CD8-positive, alpha-beta T cell (primary cell): ENCODE measurements at regions of chr17 and their contacts with region 1.

Region 1: GRCh38 chr17:42221937-42222745 is 27.8 kb upstream of the GHDC start:
- DNase-seq: peak; percentile 24 to 82 (median 66)
- ATAC-seq: peak; percentile 98
- H3K4me3 ChIP-seq: no peak overlapping the region
- H3K4me3 Mint-ChIP-seq: no peak overlapping the region
- H3K27ac ChIP-seq: no peak overlapping the region
- H3K27ac Mint-ChIP-seq: no peak overlapping the region
- H3K4me1 ChIP-seq: no peaks in the 10 kb centered on the region
- H3K4me1 Mint-ChIP-seq: peaks cover 5% of the 10 kb centered on the region
- H3K27me3 ChIP-seq: no peaks in the 10 kb centered on the region
- H3K27me3 Mint-ChIP-seq: no peaks in the 10 kb centered on the region
- CTCF ChIP-seq: peak; percentile 62

Region 2: DNA sequence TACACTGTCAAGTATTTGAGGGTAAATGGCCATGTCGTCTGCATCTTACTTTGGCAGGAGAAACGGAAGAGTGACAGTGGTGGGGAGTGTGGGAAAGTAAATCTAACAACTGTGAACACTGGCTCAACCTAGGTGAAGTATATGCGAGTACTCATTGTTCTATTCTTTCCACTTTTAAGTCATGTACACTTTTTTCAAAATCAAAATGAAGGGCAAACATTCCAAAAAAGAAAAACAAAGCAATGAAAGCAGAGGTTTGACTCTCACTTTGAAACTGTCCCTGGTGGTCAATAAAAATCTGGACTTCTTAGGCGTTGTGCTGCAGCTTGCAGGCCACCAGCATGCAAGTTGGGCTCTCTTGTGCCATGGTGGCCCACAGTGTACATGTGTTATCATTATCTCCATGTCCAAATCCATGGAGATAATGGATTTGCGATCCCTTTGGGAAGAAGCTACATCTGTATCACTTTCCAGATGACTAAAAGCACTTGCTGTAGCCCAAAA is 21.4 kb after region 1 on chr17:
- CTCF ChIA-PET with region 1: interaction called, 30 read pairs
- POLR2A ChIA-PET with region 1: interaction called, 10 read pairs
- intact Hi-C with region 1: loop called in 1 of 2 experiments (anchors 1 kb)
- DNase-seq: no peak
- ATAC-seq: no peak
- H3K4me3 ChIP-seq: no peak overlapping the region
- H3K4me3 Mint-ChIP-seq: no peak overlapping the region
- H3K27ac ChIP-seq: no peak overlapping the region
- H3K27ac Mint-ChIP-seq: peak overlapping the region; percentile 32
- H3K4me1 ChIP-seq: peaks cover 33% of the 10 kb centered on the region
- H3K4me1 Mint-ChIP-seq: peaks cover 58% of the 10 kb centered on the region
- H3K27me3 ChIP-seq: no peaks in the 10 kb centered on the region
- H3K27me3 Mint-ChIP-seq: no peaks in the 10 kb centered on the region
- CTCF ChIP-seq: no peak

Region 3: GRCh38 chr17:42266918-42267778 is 45.0 kb after region 1 on chr17:
- CTCF ChIA-PET with region 1: interaction called, 19 read pairs
- POLR2A ChIA-PET with region 1: interaction called, 3 read pairs
- intact Hi-C with region 1: no loop called
- DNase-seq: peak in 5 of 9 experiments; percentile 44 to 92 (median 79)
- ATAC-seq: peak; percentile 85
- H3K4me3 ChIP-seq: no peak overlapping the region
- H3K4me3 Mint-ChIP-seq: peak overlapping the region; percentile 18
- H3K27ac ChIP-seq: peak overlapping the region in 1 of 2 experiments; percentile 68
- H3K27ac Mint-ChIP-seq: peak overlapping the region; percentile 91
- H3K4me1 ChIP-seq: peaks cover 37% of the 10 kb centered on the region
- H3K4me1 Mint-ChIP-seq: peaks cover 55% of the 10 kb centered on the region
- H3K27me3 ChIP-seq: no peaks in the 10 kb centered on the region
- H3K27me3 Mint-ChIP-seq: no peaks in the 10 kb centered on the region
- CTCF ChIP-seq: no peak

Region 4: GRCh38 chr17:42287926-42288802 is 66.0 kb after region 1 on chr17 and contains the start of gene STAT5A:
- CTCF ChIA-PET with region 1: interaction called, 23 read pairs
- POLR2A ChIA-PET with region 1: interaction called, 8 read pairs
- intact Hi-C with region 1: loop called (anchors 1 kb)
- DNase-seq: peak; percentile 63 to 92 (median 81)
- ATAC-seq: peak; percentile 78
- H3K4me3 ChIP-seq: peak within 1 kb of the TSS; percentile 74 to 84
- H3K4me3 Mint-ChIP-seq: peak within 1 kb of the TSS; percentile 94
- H3K27ac ChIP-seq: peak within 1 kb of the TSS; percentile 87 to 94
- H3K27ac Mint-ChIP-seq: peak within 1 kb of the TSS; percentile 98
- H3K4me1 ChIP-seq: peaks cover 35% of the 10 kb centered on the region
- H3K4me1 Mint-ChIP-seq: peaks cover 50% of the 10 kb centered on the region
- H3K27me3 ChIP-seq: no peaks in the 10 kb centered on the region
- H3K27me3 Mint-ChIP-seq: no peaks in the 10 kb centered on the region
- CTCF ChIP-seq: no peak
- total RNA-seq, gene STAT5A: 300 to 319 TPM

Region 5: GRCh38 chr17:42322382-42323267 is 100.5 kb after region 1 on chr17:
- CTCF ChIA-PET with region 1: interaction called, 19 read pairs
- POLR2A ChIA-PET with region 1: no interaction called
- intact Hi-C with region 1: no loop called
- DNase-seq: peak; percentile 89 to 98 (median 96)
- ATAC-seq: peak; percentile 97
- H3K4me3 ChIP-seq: no peak overlapping the region
- H3K4me3 Mint-ChIP-seq: no peak overlapping the region
- H3K27ac ChIP-seq: peak overlapping the region in 1 of 2 experiments; percentile 38
- H3K27ac Mint-ChIP-seq: peak overlapping the region; percentile 82
- H3K4me1 ChIP-seq: peaks cover 17% of the 10 kb centered on the region
- H3K4me1 Mint-ChIP-seq: peaks cover 40% of the 10 kb centered on the region
- H3K27me3 ChIP-seq: no peaks in the 10 kb centered on the region
- H3K27me3 Mint-ChIP-seq: no peaks in the 10 kb centered on the region
- CTCF ChIP-seq: peak; percentile 99